HepG2 (cell line): ENCODE measurements at regions of chr1 and their contacts with region 1.

Region 1: GRCh38 chr1:188782219-188782841 is 1695.3 kb downstream of the BRINP3 start:
- DNase-seq: peak; percentile 64
- ATAC-seq: peak; percentile 100
- H3K4me3 ChIP-seq: no peak overlapping the region
- H3K27ac ChIP-seq: no peak overlapping the region
- H3K4me1 ChIP-seq: no peaks in the 10 kb centered on the region
- H3K27me3 ChIP-seq: no peaks in the 10 kb centered on the region
- CTCF ChIP-seq: peak; percentile 73
- EP300 ChIP-seq: no peak
- POLR2A ChIP-seq: no peak
- RAD21 ChIP-seq: no peak

Region 2: GRCh38 chr1:188906921-188907641 is 124.8 kb after region 1 on chr1:
- CTCF ChIA-PET with region 1: no interaction called
- POLR2A ChIA-PET with region 1: no interaction called
- in situ Hi-C with region 1: no loop called
- intact Hi-C with region 1: loop called (anchors 10 kb)
- DNase-seq: no peak
- ATAC-seq: no peak
- H3K4me3 ChIP-seq: no peak overlapping the region
- H3K27ac ChIP-seq: no peak overlapping the region
- H3K4me1 ChIP-seq: no peaks in the 10 kb centered on the region
- H3K27me3 ChIP-seq: no peaks in the 10 kb centered on the region
- CTCF ChIP-seq: no peak
- EP300 ChIP-seq: no peak
- POLR2A ChIP-seq: no peak
- RAD21 ChIP-seq: no peak

Region 3: GRCh38 chr1:189141056-189141455 is 358.7 kb after region 1 on chr1:
- CTCF ChIA-PET with region 1: no interaction called
- POLR2A ChIA-PET with region 1: no interaction called
- in situ Hi-C with region 1: no loop called
- intact Hi-C with region 1: no loop called
- DNase-seq: no peak
- ATAC-seq: no peak
- H3K4me3 ChIP-seq: no peak overlapping the region
- H3K27ac ChIP-seq: no peak overlapping the region
- H3K4me1 ChIP-seq: no peaks in the 10 kb centered on the region
- H3K27me3 ChIP-seq: no peaks in the 10 kb centered on the region
- CTCF ChIP-seq: no peak
- EP300 ChIP-seq: no peak
- POLR2A ChIP-seq: no peak
- RAD21 ChIP-seq: no peak